Right cardiac atrium (tissue), 5 donors: ENCODE measurements at regions of chr5 and their contacts with region 1.

Region 1: GRCh38 chr5:6632917-6633468 is at the starts of genes NSUN2 and SRD5A1:
- DNase-seq: peak; percentile 92 to 97 (median 96)
- ATAC-seq: peak; percentile 99
- H3K4me3 ChIP-seq: peak within 1 kb of the TSS; percentile 62
- H3K27ac ChIP-seq: peak within 1 kb of the TSS; percentile 83
- H3K4me1 ChIP-seq: peaks cover 1% of the 10 kb centered on the region
- H3K27me3 ChIP-seq: no peaks in the 10 kb centered on the region
- total RNA-seq, gene NSUN2: 26.2 to 31.2 (median 27.2) TPM
- total RNA-seq, gene SRD5A1: 2.8 to 3.0 (median 2.9) TPM

Region 2: GRCh38 chr5:6220346-6221088 is 412.5 kb before region 1 on chr5:
- intact Hi-C with region 1: no loop called
- DNase-seq: no peak
- ATAC-seq: no peak
- H3K4me3 ChIP-seq: no peak overlapping the region
- H3K27ac ChIP-seq: no peak overlapping the region
- H3K4me1 ChIP-seq: no peaks in the 10 kb centered on the region
- H3K27me3 ChIP-seq: no peaks in the 10 kb centered on the region

Region 3: DNA sequence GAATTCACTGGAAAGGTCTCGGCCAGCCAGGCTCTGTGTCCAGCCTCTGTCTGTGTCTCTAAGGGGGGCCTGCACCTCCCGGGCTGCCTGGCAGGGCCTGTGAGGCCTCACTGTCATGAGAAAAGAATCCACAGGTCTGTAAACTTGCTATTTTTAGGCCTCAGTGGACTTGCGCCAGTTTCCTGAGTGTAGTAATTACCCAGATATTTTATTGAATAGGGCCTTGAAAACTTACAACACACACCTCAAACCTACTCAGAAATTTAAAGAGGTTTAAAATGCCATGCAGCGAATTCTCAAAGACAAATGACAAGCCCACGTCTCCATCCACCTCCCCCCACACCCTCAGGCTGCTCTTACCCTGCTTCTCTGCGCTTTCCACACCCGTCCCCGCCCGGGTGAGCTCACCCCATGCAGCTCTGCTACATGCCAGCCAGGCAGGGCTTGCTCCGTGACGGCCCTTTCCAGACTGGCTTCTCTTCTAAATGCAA is 71.4 kb after region 1 on chr5:
- intact Hi-C with region 1: loop called in 1 of 4 experiments (anchors 10 kb)
- DNase-seq: peak; percentile 43 to 80 (median 77)
- ATAC-seq: peak; percentile 91
- H3K4me3 ChIP-seq: no peak overlapping the region
- H3K27ac ChIP-seq: peak overlapping the region; percentile 91
- H3K4me1 ChIP-seq: peaks cover 7% of the 10 kb centered on the region
- H3K27me3 ChIP-seq: no peaks in the 10 kb centered on the region

Region 4: GRCh38 chr5:6712577-6713275 is 79.7 kb after region 1 on chr5:
- intact Hi-C with region 1: loop called in 3 of 4 experiments (anchors 5 to 10 kb)
- DNase-seq: peak; percentile 96 to 99 (median 98)
- ATAC-seq: peak; percentile 91 to 93
- H3K4me3 ChIP-seq: peak overlapping the region; percentile 94
- H3K27ac ChIP-seq: peak overlapping the region; percentile 98
- H3K4me1 ChIP-seq: peaks cover 18% of the 10 kb centered on the region
- H3K27me3 ChIP-seq: no peaks in the 10 kb centered on the region

Region 5: GRCh38 chr5:6745706-6746222 is 112.8 kb after region 1 on chr5:
- intact Hi-C with region 1: loop called in 3 of 4 experiments (anchors 5 to 10 kb)
- DNase-seq: no peak
- ATAC-seq: peak; percentile 68 to 71
- H3K4me3 ChIP-seq: no peak overlapping the region
- H3K27ac ChIP-seq: peak overlapping the region; percentile 50
- H3K4me1 ChIP-seq: no peaks in the 10 kb centered on the region
- H3K27me3 ChIP-seq: no peaks in the 10 kb centered on the region